PC-3 (cell line): ENCODE measurements at regions of chr12 and their contacts with region 1.

Region 1: DNA sequence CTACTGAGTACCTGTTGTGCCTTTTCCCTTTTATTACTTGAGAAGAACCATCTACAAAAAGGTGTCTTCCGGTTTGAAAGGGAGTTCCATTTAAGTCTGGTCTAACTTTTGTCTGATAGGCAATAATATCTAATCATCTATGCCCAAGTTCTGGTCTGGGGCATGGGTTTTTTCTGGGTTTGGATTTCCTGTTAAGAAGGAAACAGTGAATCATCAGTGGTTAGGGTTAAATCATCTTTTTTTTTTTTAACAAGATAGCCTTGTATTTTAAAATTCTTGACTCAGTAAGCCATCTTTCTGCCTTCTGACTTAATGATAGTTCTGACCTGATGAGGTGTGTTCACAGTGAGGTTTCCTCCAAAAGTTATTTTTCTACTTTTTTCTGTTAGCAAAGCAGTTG is 29.3 kb upstream of the CPNE8 start:
- DNase-seq: peak; percentile 52
- ATAC-seq: no peak; the same call in 1 of the 2 replicates
- H3K4me3 ChIP-seq: no peak overlapping the region
- H3K27ac ChIP-seq: peak overlapping the region; percentile 40
- H3K4me1 ChIP-seq: peaks cover 28% of the 10 kb centered on the region
- H3K27me3 ChIP-seq: no peaks in the 10 kb centered on the region
- CTCF ChIP-seq: no peak

Region 2: GRCh38 chr12:38484821-38485472 is 449.7 kb before region 1 on chr12:
- CTCF ChIA-PET with region 1: no interaction called
- POLR2A ChIA-PET with region 1: no interaction called
- intact Hi-C with region 1: no loop called
- DNase-seq: no peak
- ATAC-seq: no peak
- H3K4me3 ChIP-seq: no peak overlapping the region
- H3K27ac ChIP-seq: no peak overlapping the region
- H3K4me1 ChIP-seq: 0 out of 2 replicates have a peak, but pooled peaks cover 6% of the 10 kb centered on the region
- H3K27me3 ChIP-seq: no peaks in the 10 kb centered on the region
- CTCF ChIP-seq: no peak

Region 3: DNA sequence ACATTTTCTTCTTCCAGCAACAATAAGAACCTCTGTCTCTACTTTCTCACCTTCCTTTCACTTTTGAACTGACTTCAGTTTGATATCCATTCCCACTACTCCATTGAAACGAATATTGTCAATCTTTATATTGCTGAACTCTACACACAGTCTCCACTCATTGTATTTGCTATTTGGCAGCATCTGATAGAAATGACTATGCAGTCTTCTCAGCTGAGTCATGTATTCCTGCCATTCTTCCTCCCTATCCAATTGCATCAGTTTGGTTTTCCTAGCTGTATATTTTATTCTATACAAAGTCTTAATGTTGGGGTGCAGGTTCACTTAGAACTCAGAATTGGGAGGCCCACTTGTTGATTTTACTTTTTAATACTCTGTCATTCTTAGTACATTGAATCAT is 78.2 kb after region 1 on chr12:
- CTCF ChIA-PET with region 1: no interaction called
- POLR2A ChIA-PET with region 1: no interaction called
- intact Hi-C with region 1: loop called (anchors 5 kb)
- DNase-seq: peak; percentile 65
- ATAC-seq: peak; percentile 88
- H3K4me3 ChIP-seq: no peak overlapping the region
- H3K27ac ChIP-seq: no peak overlapping the region
- H3K4me1 ChIP-seq: peaks cover 12% of the 10 kb centered on the region
- H3K27me3 ChIP-seq: no peaks in the 10 kb centered on the region
- CTCF ChIP-seq: no peak